Mucosa of descending colon (tissue), 3 donors: ENCODE measurements at regions of chr10 and their contacts with region 1.

Region 1: GRCh38 chr10:11515596-11516430 is 95.6 kb downstream of the USP6NL start:
- DNase-seq: peak in 1 of 3 donors; percentile 73
- ATAC-seq: peak; percentile 86
- H3K4me3 ChIP-seq: no peak overlapping the region
- H3K4me1 ChIP-seq: no peaks in the 10 kb centered on the region
- CTCF ChIP-seq: peak; percentile 28

Region 2: GRCh38 chr10:11724938-11725776 is 209.3 kb after region 1 on chr10:
- intact Hi-C with region 1: loop called (anchors 10 kb)
- DNase-seq: peak in 1 of 3 donors; percentile 58
- ATAC-seq: peak; percentile 77
- H3K4me3 ChIP-seq: no peak overlapping the region
- H3K4me1 ChIP-seq: no peaks in the 10 kb centered on the region
- CTCF ChIP-seq: no peak

Region 3: GRCh38 chr10:11757821-11758463 is 242.1 kb after region 1 on chr10:
- intact Hi-C with region 1: loop called (anchors 1 to 5 kb)
- DNase-seq: peak; percentile 87 to 94 (median 92)
- ATAC-seq: peak; percentile 98
- H3K4me3 ChIP-seq: no peak overlapping the region
- H3K4me1 ChIP-seq: peaks cover 10% of the 10 kb centered on the region
- CTCF ChIP-seq: peak; percentile 86